ENCODE measurements at regions of chr1 and their contacts with region 1.

Region 1: DNA sequence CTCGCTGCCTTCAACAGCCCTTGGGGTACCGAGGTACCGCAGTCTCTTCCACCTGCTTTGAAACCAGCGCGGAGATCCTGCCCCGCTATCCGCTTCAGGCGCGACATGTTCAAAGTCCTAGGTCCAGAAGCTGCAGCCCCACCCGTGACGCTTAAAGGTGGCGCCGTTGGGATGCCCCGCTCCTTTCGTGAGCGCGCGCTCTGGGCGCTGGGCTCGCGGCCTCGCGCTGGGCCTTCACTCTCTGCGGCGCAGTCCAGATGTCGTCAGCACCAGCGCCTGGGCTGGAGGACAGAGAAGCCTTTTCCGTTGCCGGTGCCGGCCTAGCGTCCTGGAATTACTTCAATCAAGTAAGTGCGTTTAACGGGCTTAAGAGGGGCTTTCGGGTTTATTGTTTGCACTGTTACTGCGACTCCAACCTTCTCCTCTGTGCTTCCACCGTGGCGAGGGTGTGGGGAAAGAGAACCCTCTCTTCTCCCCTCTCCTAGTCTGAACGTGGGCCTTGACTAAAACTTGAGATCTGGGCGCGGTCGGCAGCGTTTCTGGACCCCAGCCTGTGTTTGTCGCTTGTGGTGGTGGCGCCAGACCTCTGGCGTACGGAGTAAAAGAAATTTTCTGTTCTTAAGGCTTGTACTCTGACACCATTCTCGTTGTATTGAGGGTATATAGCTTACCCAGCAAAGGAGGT is at the start of gene LRRC40:
- DNase-seq: peak; percentile 90 to 98 (median 92)
- ATAC-seq: peak; percentile 80
- H3K4me3 ChIP-seq: peak within 1 kb of the TSS; percentile 71
- H3K27ac ChIP-seq: peak within 1 kb of the TSS; percentile 96
- H3K4me1 ChIP-seq: peaks cover 0 to 3% of the 10 kb centered on the region in 2 experiments; a peak in 3 of 5 replicates
- H3K27me3 ChIP-seq: no peaks in the 10 kb centered on the region
- CTCF ChIP-seq: 0 out of 6 replicates have a peak, but pooled peaks of 2 of the 3 experiments have one; percentile 1 to 27
- EP300 ChIP-seq: peak; percentile 60
- POLR2A ChIP-seq: peak; percentile 92
- RAD21 ChIP-seq: no peak
- polyA plus RNA-seq, gene LRRC40: 32.2 to 36.2 TPM

Region 2: DNA sequence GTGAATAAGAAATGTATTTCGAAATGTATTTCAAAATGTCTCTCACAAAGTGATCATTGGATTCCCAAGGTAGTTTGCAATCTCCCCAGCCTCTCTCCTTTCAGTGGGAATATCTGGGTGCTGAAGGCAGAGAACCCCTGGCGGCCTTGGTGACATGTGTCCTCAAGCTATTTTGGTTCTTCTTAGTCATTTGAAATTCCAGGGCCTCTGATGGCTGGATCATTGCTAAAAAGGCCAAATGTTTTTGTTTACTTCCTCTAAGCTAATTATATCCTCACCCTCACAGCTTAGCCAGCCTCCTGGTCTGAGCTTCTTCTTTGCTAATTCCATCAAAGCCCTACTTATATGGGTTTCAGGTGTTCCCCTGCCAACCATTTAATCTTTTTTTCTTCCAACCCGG is 71.4 kb before region 1 on chr1:
- CTCF ChIA-PET with region 1: no interaction called
- POLR2A ChIA-PET with region 1: no interaction called
- in situ Hi-C with region 1: no loop called
- intact Hi-C with region 1: no loop called
- DNase-seq: no peak
- ATAC-seq: no peak
- H3K4me3 ChIP-seq: no peak overlapping the region
- H3K27ac ChIP-seq: no peak overlapping the region
- H3K4me1 ChIP-seq: no peaks in the 10 kb centered on the region
- H3K27me3 ChIP-seq: no peaks in the 10 kb centered on the region
- CTCF ChIP-seq: no peak
- EP300 ChIP-seq: no peak
- POLR2A ChIP-seq: no peak
- RAD21 ChIP-seq: no peak

Region 3: DNA sequence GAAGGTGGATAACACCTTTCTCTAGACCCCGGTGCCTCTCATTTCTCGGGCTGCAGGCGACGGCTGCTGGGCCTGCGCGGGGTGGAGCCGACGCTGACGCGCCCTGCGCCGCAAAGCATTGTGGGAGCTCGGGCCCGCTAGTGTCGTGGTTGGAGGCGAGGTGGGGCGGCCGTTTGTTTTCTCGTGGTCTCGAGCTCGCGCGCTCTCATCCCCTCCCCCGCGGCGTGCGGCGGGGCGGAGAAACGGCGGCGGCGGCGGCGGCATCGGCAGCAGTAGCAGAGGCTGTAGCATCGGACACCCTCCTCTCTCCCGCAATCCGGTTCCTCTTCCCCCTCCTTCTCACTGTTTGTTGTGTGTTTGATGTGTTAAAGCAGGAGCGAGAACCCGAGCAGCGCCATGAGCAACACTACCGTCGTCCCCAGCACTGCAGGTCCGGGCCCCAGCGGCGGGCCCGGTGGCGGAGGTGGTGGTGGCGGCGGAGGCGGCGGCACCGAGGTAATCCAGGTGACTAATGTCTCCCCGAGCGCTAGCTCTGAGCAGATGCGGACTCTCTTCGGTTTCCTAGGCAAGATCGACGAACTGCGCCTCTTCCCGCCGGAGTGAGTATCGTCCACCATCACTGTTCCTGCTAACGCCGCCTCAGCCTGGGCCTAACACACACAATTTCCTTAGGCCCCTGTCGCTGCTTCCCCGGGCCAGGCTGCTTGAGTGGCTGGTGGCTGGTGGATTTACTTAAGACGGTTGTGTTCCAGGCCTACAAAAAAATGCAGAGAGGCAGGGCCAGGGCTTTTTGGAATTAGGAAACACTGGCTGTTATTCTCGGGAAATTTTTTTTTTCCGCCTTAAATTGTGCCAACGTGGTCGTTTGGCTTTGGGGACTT is 15.9 kb after region 1 on chr1 and contains the start of gene SRSF11:
- CTCF ChIA-PET with region 1: interaction called, 3 read pairs
- POLR2A ChIA-PET with region 1: interaction called, 58 read pairs
- in situ Hi-C with region 1: no loop called
- intact Hi-C with region 1: loop called (anchors 1 kb)
- DNase-seq: peak; percentile 88 to 97 (median 89)
- ATAC-seq: peak; percentile 92
- H3K4me3 ChIP-seq: peak within 1 kb of the TSS; percentile 61
- H3K27ac ChIP-seq: peak within 1 kb of the TSS; percentile 94
- H3K4me1 ChIP-seq: peaks cover 9 to 24% of the 10 kb centered on the region in 2 experiments; a peak in 4 of 5 replicates
- H3K27me3 ChIP-seq: no peaks in the 10 kb centered on the region
- CTCF ChIP-seq: peak; percentile 3 to 26 (median 10); a peak in 2 of 6 replicates
- EP300 ChIP-seq: no peak
- POLR2A ChIP-seq: peak; percentile 91
- RAD21 ChIP-seq: no peak
- polyA plus RNA-seq, gene SRSF11: 76.9 to 79.2 TPM

Region 4: GRCh38 chr1:71080739-71081696 is 875.4 kb after region 1 on chr1 and contains the start of gene ZRANB2:
- CTCF ChIA-PET with region 1: no interaction called
- POLR2A ChIA-PET with region 1: no interaction called
- in situ Hi-C with region 1: no loop called
- intact Hi-C with region 1: loop called (anchors 2 kb)
- DNase-seq: peak; percentile 93 to 97 (median 94)
- ATAC-seq: peak; percentile 96
- H3K4me3 ChIP-seq: peak within 1 kb of the TSS; percentile 68
- H3K27ac ChIP-seq: peak within 1 kb of the TSS; percentile 89
- H3K4me1 ChIP-seq: no peaks in the 10 kb centered on the region; a peak in 2 of 5 replicates
- H3K27me3 ChIP-seq: no peaks in the 10 kb centered on the region; a peak in 1 of 5 replicates
- CTCF ChIP-seq: peak; percentile 65 to 81 (median 80)
- EP300 ChIP-seq: peak; percentile 59
- POLR2A ChIP-seq: peak; percentile 94
- RAD21 ChIP-seq: no peak
- polyA plus RNA-seq, gene ZRANB2: 194 to 244 TPM